Calu3 (cell line): ENCODE measurements at regions of chr9 and their contacts with region 1.

Region 1: DNA sequence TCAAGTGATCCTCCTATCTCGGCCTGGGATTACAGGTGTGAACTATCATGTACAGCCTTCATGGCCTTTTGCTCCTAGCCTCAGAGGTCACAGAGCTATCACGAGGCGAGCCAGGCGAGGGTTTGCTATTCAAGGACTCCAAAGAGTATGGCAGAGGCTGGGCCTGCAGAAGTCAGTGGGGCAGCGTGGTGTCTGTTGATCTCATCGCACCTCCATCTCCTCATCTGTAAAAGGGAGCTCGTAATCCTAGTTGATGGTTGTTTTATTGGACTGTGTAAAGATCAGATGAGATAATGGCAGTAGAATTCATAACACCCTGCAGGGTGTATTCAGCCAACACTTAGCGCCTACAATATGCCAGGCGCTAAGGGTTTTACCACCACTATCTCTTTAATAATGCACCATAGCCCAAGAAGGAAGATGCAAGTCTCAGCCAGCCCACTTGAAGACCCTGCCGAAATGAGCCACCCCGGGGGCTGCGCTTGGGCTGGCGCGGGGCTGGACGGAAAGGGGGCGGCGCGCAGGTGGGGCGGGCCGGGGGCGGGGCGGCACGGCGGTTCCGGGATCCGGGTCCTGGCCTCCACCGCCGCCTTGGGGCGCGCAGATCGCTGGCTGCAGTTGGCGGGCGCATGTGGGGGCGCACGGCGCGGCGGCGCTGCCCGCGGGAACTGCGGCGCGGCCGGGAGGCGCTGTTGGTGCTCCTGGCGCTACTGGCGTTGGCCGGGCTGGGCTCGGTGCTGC is at the start of gene GALNT12:
- DNase-seq: peak; percentile 57
- H3K4me3 Mint-ChIP-seq: peak within 1 kb of the TSS; percentile 84
- H3K27ac Mint-ChIP-seq: peak within 1 kb of the TSS; percentile 73
- H3K4me1 Mint-ChIP-seq: peaks cover 41% of the 10 kb centered on the region
- H3K27me3 Mint-ChIP-seq: no peaks in the 10 kb centered on the region
- CTCF ChIP-seq: no peak
- total RNA-seq, gene GALNT12: 49.2 and 51.2 TPM in 2 replicates

Region 2: DNA sequence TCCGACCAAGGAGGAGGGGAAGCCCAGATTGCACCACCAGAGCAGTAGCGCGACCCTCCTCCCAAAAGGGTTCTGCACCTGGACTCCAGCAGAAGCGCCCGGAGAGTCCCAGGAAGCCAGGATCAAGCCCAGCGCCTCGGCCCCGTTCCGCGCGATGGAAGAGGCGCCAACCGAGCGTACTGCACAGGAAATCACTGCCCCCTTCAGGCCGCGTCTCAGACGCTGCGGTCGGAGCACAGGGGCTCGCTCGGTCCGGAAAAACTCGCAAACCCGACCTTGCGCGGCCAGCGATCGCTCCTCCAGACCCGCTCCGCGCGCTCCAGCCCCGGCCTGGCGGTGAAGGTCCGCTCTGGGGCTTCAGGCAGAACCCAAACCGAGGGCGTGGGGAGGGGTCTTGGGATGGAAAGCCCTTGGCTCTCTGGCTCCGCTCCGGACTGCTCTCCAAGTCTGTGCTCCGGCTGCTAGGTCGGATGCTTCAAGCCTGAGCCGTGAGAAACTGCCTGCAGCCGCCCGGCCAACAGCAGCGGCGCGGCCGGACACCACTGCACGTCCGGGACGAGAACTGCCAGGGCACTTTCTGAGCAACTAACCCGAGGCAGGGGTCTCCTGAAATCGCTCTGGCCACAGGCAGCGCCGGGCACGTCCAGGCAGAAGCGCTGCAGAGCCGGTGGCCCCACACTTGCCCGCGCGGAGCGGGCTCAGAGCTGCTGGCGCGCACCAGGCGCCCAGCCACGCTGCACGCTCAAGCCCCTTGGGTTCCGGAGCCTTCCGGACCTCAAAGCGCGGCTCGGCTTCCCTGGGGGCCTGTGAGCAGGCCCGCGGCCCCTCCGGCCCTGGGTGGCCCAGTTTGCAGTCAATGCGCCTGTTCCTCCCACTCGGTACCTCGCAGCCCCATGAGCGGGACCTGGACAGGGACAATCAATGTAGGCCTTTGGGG is 99.8 kb before region 1 on chr9:
- CTCF ChIA-PET with region 1: no interaction called
- intact Hi-C with region 1: no loop called
- DNase-seq: peak; percentile 57
- H3K4me3 Mint-ChIP-seq: peak overlapping the region; percentile 43
- H3K27ac Mint-ChIP-seq: no peak overlapping the region
- H3K4me1 Mint-ChIP-seq: no peaks in the 10 kb centered on the region
- H3K27me3 Mint-ChIP-seq: peaks cover 87% of the 10 kb centered on the region
- CTCF ChIP-seq: peak; percentile 6

Region 3: GRCh38 chr9:98848450-98849149 is 41.4 kb after region 1 on chr9:
- CTCF ChIA-PET with region 1: interaction called, 6 read pairs
- intact Hi-C with region 1: loop called (anchors 1 kb)
- DNase-seq: peak; percentile 90
- H3K4me3 Mint-ChIP-seq: no peak overlapping the region
- H3K27ac Mint-ChIP-seq: peak overlapping the region; percentile 77
- H3K4me1 Mint-ChIP-seq: peaks cover 10% of the 10 kb centered on the region
- H3K27me3 Mint-ChIP-seq: no peaks in the 10 kb centered on the region
- CTCF ChIP-seq: peak; percentile 56

Region 4: GRCh38 chr9:98974994-98975712 is 167.9 kb after region 1 on chr9:
- CTCF ChIA-PET with region 1: no interaction called
- intact Hi-C with region 1: loop called (anchors 5 kb)
- DNase-seq: peak; percentile 84
- H3K4me3 Mint-ChIP-seq: no peak overlapping the region
- H3K27ac Mint-ChIP-seq: no peak overlapping the region
- H3K4me1 Mint-ChIP-seq: peaks cover 7% of the 10 kb centered on the region
- H3K27me3 Mint-ChIP-seq: peaks cover 23% of the 10 kb centered on the region
- CTCF ChIP-seq: peak; percentile 81

Region 5: GRCh38 chr9:98998441-98999151 is 191.4 kb after region 1 on chr9:
- CTCF ChIA-PET with region 1: interaction called, 6 read pairs
- intact Hi-C with region 1: loop called (anchors 1 kb)
- DNase-seq: peak; percentile 77
- H3K4me3 Mint-ChIP-seq: no peak overlapping the region
- H3K27ac Mint-ChIP-seq: no peak overlapping the region
- H3K4me1 Mint-ChIP-seq: peaks cover 3% of the 10 kb centered on the region
- H3K27me3 Mint-ChIP-seq: peaks cover 79% of the 10 kb centered on the region
- CTCF ChIP-seq: peak; percentile 73

Region 6: DNA sequence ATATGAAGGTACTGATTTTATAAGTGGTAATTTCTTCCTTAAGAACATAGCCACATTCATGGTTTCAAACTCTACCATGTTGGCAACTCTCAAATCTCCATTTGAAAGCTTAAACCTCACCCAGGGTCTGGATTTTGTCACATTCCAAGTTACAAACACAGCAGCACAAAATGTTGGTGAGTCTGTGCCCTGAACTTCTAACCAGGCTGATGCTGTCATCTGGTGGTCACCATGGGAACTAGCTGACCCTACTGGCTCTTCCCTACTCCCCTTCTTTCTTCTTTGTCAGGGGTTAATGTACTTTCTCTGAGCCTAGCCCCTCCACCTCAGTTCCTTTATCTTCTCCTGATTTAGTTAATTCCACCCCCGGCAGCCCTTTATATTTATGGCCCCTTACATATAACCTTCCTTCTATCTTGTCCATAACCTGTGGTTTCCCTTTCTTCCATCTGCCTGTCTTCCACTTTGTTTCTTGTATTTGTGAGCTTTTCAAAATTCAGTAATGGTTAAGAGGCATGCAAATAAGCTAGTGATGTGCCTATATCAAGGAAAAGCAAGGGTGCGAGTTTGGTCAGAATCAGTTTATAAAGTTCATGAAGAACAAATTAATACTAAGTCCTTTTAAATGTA is 333.6 kb after region 1 on chr9:
- CTCF ChIA-PET with region 1: interaction called, 3 read pairs
- intact Hi-C with region 1: loop called (anchors 2 kb)
- DNase-seq: peak; percentile 19
- H3K4me3 Mint-ChIP-seq: no peak overlapping the region
- H3K27ac Mint-ChIP-seq: no peak overlapping the region
- H3K4me1 Mint-ChIP-seq: peaks cover 9% of the 10 kb centered on the region
- H3K27me3 Mint-ChIP-seq: no peaks in the 10 kb centered on the region
- CTCF ChIP-seq: peak; percentile 31